HepG2 (cell line): ENCODE measurements at regions of chr19 and their contacts with region 1.

Region 1: GRCh38 chr19:18588611-18589379 is at the start of gene REX1BD:
- DNase-seq: peak; percentile 78
- ATAC-seq: peak; percentile 84
- H3K4me3 ChIP-seq: peak within 1 kb of the TSS; percentile 59 to 85 (median 68)
- H3K27ac ChIP-seq: peak within 1 kb of the TSS; percentile 92
- H3K4me1 ChIP-seq: peaks cover 33% of the 10 kb centered on the region
- H3K27me3 ChIP-seq: no peaks in the 10 kb centered on the region; a peak in 1 of 5 replicates
- CTCF ChIP-seq: peak; percentile 97
- EP300 ChIP-seq: no peak
- POLR2A ChIP-seq: peak; percentile 75 to 98
- RAD21 ChIP-seq: peak; percentile 72
- total RNA-seq, gene REX1BD: 20.7 and 25.4 TPM in 2 replicates

Region 2: GRCh38 chr19:18412610-18413239 is 176.1 kb before region 1 on chr19:
- CTCF ChIA-PET with region 1: no interaction called
- POLR2A ChIA-PET with region 1: no interaction called
- in situ Hi-C with region 1: no loop called
- intact Hi-C with region 1: no loop called
- DNase-seq: no peak
- ATAC-seq: no peak
- H3K4me3 ChIP-seq: no peak overlapping the region
- H3K27ac ChIP-seq: no peak overlapping the region
- H3K4me1 ChIP-seq: peaks cover 63% of the 10 kb centered on the region
- H3K27me3 ChIP-seq: no peaks in the 10 kb centered on the region
- CTCF ChIP-seq: no peak
- EP300 ChIP-seq: no peak
- POLR2A ChIP-seq: no peak
- RAD21 ChIP-seq: no peak

Region 3: GRCh38 chr19:18521885-18522624 is 66.7 kb before region 1 on chr19 and contains the start of gene ELL:
- CTCF ChIA-PET with region 1: no interaction called
- POLR2A ChIA-PET with region 1: interaction called, 37 read pairs
- in situ Hi-C with region 1: no loop called
- intact Hi-C with region 1: no loop called
- DNase-seq: peak; percentile 99
- ATAC-seq: peak; percentile 77
- H3K4me3 ChIP-seq: peak within 1 kb of the TSS; percentile 95 to 100 (median 96)
- H3K27ac ChIP-seq: peak within 1 kb of the TSS; percentile 94
- H3K4me1 ChIP-seq: peaks cover 53% of the 10 kb centered on the region
- H3K27me3 ChIP-seq: no peaks in the 10 kb centered on the region; a peak in 1 of 5 replicates
- CTCF ChIP-seq: 0 out of 2 replicates have a peak, but pooled peaks have one; percentile 18
- EP300 ChIP-seq: 0 out of 4 replicates have a peak, but pooled peaks of 1 of the 2 experiments have one; percentile 9
- POLR2A ChIP-seq: peak; percentile 90 to 93
- RAD21 ChIP-seq: peak; percentile 35
- total RNA-seq, gene ELL: 3.2 and 3.7 TPM in 2 replicates

Region 4: DNA sequence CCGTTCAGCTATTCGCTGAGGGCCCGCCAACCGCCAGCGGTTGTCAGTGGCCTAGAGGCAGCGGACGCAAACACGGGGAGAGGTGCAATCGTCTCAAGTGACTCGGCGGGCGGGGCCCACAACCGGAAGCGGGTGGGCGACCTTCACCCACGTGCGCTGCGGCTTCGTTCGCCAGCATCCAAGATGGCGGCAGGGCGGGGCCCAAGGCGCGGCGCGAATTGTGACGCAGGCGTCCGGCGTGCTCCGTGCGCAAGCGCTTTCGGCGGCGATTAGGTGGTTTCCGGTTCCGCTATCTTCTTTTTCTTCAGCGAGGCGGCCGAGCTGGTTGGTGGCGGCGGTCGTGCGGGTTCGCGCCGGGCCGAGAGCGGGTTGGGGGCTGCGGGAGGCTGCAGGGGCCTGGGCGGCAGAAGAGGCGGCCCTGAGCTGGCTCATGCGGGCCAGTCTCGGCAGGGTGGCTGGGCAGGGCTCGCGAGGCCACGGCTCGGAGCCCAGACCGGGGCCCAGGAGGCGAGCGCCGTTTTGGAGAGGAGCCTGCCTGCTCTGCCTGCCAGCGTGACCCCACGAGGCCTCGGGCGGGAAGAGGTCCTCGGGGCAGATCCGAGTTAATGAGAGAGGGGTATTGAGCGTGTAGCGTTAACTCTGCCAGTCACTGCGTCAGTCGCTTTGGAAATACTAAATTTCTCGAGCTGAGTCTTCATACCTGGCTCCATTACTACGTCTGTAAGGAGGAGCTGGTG is 17.1 kb before region 1 on chr19 and contains the start of gene UBA52:
- CTCF ChIA-PET with region 1: no interaction called
- POLR2A ChIA-PET with region 1: interaction called, 74 read pairs
- in situ Hi-C with region 1: no loop called
- intact Hi-C with region 1: no loop called
- DNase-seq: peak; percentile 93
- ATAC-seq: peak; percentile 95
- H3K4me3 ChIP-seq: peak within 1 kb of the TSS; percentile 75 to 90 (median 85)
- H3K27ac ChIP-seq: peak within 1 kb of the TSS; percentile 75
- H3K4me1 ChIP-seq: peaks cover 20% of the 10 kb centered on the region
- H3K27me3 ChIP-seq: no peaks in the 10 kb centered on the region; a peak in 1 of 5 replicates
- CTCF ChIP-seq: peak; percentile 48
- EP300 ChIP-seq: peak in 1 of 2 experiments; percentile 41; a peak in 1 of 4 replicates
- POLR2A ChIP-seq: peak; percentile 68 to 88; a peak in 3 of 4 replicates
- RAD21 ChIP-seq: peak; percentile 47
- total RNA-seq, gene UBA52: 959 and 1,184 TPM in 2 replicates

Region 5: GRCh38 chr19:18629166-18630088 is 40.6 kb after region 1 on chr19:
- CTCF ChIA-PET with region 1: no interaction called
- POLR2A ChIA-PET with region 1: no interaction called
- in situ Hi-C with region 1: no loop called
- intact Hi-C with region 1: no loop called
- DNase-seq: no peak
- ATAC-seq: no peak
- H3K4me3 ChIP-seq: no peak overlapping the region
- H3K27ac ChIP-seq: no peak overlapping the region
- H3K4me1 ChIP-seq: peaks cover 11% of the 10 kb centered on the region
- H3K27me3 ChIP-seq: peaks cover 0 to 14% of the 10 kb centered on the region in 2 experiments; a peak in 2 of 5 replicates
- CTCF ChIP-seq: no peak
- EP300 ChIP-seq: no peak
- POLR2A ChIP-seq: no peak
- RAD21 ChIP-seq: no peak

Region 6: DNA sequence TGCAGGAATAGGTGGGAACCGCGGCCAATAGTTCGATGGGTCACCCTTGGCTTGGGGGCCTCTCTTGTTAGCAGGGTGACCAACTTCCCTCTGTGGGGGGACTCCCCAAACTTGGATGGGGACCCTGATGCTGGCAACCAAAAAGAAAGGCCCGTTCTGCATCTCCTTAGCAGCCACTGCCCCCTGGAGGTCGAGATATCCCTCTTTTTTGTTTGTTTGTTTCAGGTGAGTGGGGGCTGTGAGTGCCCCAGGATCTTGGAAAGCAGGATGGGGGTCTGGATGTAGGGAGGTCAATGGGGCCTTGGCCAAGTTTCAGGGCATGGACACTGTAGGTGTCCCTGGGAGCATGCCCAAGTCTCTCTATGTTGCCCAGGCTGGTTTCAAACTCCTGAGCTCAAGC is 87.0 kb after region 1 on chr19:
- CTCF ChIA-PET with region 1: no interaction called
- POLR2A ChIA-PET with region 1: interaction called, 4 read pairs
- in situ Hi-C with region 1: loop called (anchors 5 kb)
- intact Hi-C with region 1: loop called (anchors 1 kb)
- DNase-seq: no peak
- ATAC-seq: no peak
- H3K4me3 ChIP-seq: no peak overlapping the region
- H3K27ac ChIP-seq: no peak overlapping the region
- H3K4me1 ChIP-seq: peaks cover 48% of the 10 kb centered on the region
- H3K27me3 ChIP-seq: no peaks in the 10 kb centered on the region; a peak in 1 of 5 replicates
- CTCF ChIP-seq: peak; percentile 66
- EP300 ChIP-seq: no peak
- POLR2A ChIP-seq: no peak
- RAD21 ChIP-seq: peak; percentile 47; the same call in 1 of the 2 replicates